Heart left ventricle (tissue), 16 donors: ENCODE measurements at regions of chr1 and their contacts with region 1.

Region 1: DNA sequence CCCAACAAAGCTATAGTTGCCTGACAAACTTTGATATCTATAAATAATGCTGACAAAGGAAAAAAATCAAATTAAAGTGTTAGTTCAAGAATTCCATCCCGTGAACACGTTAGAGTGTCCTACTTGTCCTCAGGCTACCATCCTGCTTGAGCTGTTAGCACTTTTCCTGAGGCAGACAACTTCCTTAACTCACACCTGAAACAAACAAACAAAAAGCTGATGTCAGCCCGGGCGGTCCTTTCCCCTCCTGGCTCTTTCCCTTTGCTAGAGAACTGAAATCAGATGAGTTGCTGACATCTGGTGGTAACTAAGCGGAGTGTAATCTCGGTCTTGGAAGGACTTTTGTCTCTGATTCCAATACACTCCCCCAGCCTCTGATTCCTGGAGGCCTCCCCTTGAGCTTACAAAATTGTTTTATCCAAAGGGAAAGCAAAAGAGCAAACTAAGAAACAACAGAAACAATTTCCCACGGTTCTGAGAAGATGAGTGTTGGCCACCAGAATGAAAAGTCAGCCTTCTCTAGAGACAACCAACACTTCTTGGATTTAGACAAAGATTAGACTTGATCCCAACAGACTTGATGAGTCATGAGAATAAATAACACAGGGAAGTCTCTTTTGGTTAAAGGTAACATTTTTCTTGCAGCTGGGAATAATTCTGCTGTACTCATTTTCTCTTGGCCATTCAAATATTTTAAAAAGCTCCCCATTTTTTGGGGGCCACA is 135.4 kb downstream of the PROX1 start:
- DNase-seq: peak in 3 of 5 donors; percentile 22 to 51 (median 35)
- ATAC-seq: peak; percentile 64 to 89 (median 86)
- H3K4me3 ChIP-seq: no peak overlapping the region
- H3K27ac ChIP-seq: peak overlapping the region in 1 of 12 donors; percentile 31
- H3K4me1 ChIP-seq: peaks cover 0 to 7% (median 0%) of the 10 kb centered on the region in 12 donors
- H3K27me3 ChIP-seq: no peaks in the 10 kb centered on the region
- CTCF ChIP-seq: peak; percentile 36 to 71 (median 60)
- POLR2A ChIP-seq: no peak

Region 2: DNA sequence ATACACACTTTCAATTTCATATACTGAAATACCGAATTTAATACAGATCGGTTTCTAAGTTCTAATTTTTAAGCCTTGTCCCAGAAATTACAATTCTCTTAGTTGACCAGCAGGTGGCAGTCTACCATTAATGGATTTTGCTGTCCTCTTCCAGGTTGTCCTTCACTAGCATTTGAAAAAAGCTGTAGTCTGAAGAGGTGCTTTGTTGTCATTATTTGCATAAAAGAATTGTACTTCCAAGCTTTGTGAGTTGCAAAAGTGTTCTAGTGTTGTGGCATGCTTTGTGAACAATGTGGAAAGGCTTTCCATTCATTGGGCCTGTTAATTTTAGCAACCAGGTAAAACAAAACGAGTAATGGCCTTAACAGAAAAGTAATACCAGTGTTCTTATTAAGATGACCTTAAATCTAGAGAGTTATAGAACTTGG is 878.5 kb before region 1 on chr1:
- intact Hi-C with region 1: loop called in 8 of 10 experiments (anchors 2 to 10 kb)
- DNase-seq: peak in 1 of 5 donors; percentile 29
- ATAC-seq: no peak
- H3K4me3 ChIP-seq: no peak overlapping the region
- H3K27ac ChIP-seq: no peak overlapping the region
- H3K4me1 ChIP-seq: no peaks in the 10 kb centered on the region
- H3K27me3 ChIP-seq: no peaks in the 10 kb centered on the region
- CTCF ChIP-seq: peak; percentile 71 to 88 (median 79)
- POLR2A ChIP-seq: no peak

Region 3: DNA sequence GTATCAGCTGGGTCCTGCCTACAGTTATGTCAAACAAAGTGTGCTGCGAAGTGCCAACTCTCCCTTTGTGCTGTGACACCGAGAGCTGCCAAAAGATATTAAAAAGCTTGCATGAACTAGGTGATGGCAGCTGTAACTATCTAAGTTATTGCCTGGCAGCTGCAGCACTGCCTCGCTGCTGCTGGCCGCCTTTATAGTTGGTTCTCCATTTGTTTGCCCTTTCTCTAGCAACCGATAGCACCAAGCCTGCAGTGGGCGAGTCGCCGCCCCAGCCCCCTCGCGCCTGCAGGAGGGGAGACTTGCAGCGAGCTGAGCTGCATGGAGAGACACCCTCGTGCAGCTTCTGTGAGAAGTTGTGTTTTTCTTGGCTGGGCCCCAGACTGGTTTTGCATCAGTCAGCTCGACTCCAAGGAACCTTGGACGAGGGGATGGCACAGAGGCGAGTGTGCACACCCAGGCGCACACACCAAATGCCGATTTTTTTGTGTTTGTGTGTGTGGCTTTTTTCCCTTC is 741.6 kb before region 1 on chr1:
- intact Hi-C with region 1: loop called in 1 of 10 experiments (anchors 1 kb)
- DNase-seq: peak in 4 of 5 donors; percentile 37 to 68 (median 50)
- ATAC-seq: peak; percentile 90 to 97 (median 95)
- H3K4me3 ChIP-seq: peak overlapping the region in 6 of 12 donors; percentile 7 to 36 (median 12)
- H3K27ac ChIP-seq: peak overlapping the region in 1 of 12 donors; percentile 3
- H3K4me1 ChIP-seq: peaks cover 0 to 10% (median 0%) of the 10 kb centered on the region in 12 donors
- H3K27me3 ChIP-seq: no peaks in the 10 kb centered on the region
- CTCF ChIP-seq: no peak
- POLR2A ChIP-seq: no peak

Region 4: GRCh38 chr1:213996320-213997037 is 126.7 kb before region 1 on chr1:
- intact Hi-C with region 1: loop called in 1 of 10 experiments (anchors 5 kb)
- DNase-seq: peak in 3 of 5 donors; percentile 48 to 63 (median 62)
- ATAC-seq: peak; percentile 25 to 77 (median 59)
- H3K4me3 ChIP-seq: peak overlapping the region in 9 of 12 donors; percentile 12 to 55 (median 33)
- H3K27ac ChIP-seq: peak overlapping the region in 10 of 12 donors; percentile 0 to 62 (median 44)
- H3K4me1 ChIP-seq: peaks cover 0 to 24% (median 7%) of the 10 kb centered on the region in 12 donors
- H3K27me3 ChIP-seq: no peaks in the 10 kb centered on the region
- CTCF ChIP-seq: no peak
- POLR2A ChIP-seq: no peak